ENCODE measurements at regions of chr22 and their contacts with region 1.

Region 1: GRCh38 chr22:17903564-17904295 is 120.6 kb downstream of the MICAL3 start:
- DNase-seq: peak in 1 of 3 donors; percentile 54
- ATAC-seq: peak; percentile 13 to 38
- H3K4me3 ChIP-seq: no peak overlapping the region
- H3K27ac ChIP-seq: peak overlapping the region; percentile 65
- H3K4me1 ChIP-seq: peaks cover 15% of the 10 kb centered on the region
- H3K27me3 ChIP-seq: no peaks in the 10 kb centered on the region

Region 2: DNA sequence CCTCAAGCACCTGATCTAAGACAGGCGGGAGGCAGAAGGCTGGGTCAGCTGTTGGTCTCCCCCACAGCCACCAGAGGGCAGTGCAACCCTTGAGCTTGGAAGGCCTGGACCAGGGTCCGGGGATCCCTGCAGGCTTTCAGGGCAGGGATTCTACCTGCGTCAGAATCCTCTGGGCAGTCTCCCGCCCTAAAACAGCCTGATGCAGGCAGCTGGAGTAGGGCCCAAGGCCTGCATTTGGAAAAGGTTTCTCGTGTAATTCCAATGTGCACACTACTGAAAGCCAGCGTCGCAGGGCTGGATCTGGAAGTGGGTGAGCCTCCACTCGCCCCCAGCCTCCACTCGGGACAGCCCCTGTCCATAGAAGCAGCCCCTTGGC is 161.2 kb before region 1 on chr22:
- intact Hi-C with region 1: no loop called
- DNase-seq: peak; percentile 55 to 75 (median 73)
- ATAC-seq: peak; percentile 40 to 65
- H3K4me3 ChIP-seq: no peak overlapping the region
- H3K27ac ChIP-seq: no peak overlapping the region
- H3K4me1 ChIP-seq: no peaks in the 10 kb centered on the region
- H3K27me3 ChIP-seq: no peaks in the 10 kb centered on the region

Region 3: DNA sequence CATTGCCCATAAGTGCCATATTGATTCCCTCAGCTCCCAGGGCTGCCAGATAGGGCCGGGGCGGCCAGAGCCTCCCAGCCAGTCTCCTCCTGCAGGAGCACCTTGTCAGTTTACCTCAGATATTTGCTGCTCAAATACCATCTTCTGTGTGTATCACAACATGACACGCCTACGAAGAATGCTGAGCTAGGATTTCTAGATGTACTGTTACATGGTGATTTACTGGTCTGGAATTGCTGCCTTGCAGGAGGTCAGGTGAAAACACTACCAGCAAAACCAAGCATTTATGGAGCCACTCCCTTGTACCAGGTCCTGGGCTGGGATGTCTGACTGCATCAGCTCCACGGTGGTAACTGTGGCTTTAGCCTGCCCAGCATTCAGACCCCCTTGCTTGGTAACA is 108.8 kb after region 1 on chr22:
- intact Hi-C with region 1: loop called in 2 of 4 experiments (anchors 10 kb)
- DNase-seq: no peak
- ATAC-seq: no peak
- H3K4me3 ChIP-seq: no peak overlapping the region
- H3K27ac ChIP-seq: no peak overlapping the region
- H3K4me1 ChIP-seq: no peaks in the 10 kb centered on the region
- H3K27me3 ChIP-seq: no peaks in the 10 kb centered on the region

Region 4: DNA sequence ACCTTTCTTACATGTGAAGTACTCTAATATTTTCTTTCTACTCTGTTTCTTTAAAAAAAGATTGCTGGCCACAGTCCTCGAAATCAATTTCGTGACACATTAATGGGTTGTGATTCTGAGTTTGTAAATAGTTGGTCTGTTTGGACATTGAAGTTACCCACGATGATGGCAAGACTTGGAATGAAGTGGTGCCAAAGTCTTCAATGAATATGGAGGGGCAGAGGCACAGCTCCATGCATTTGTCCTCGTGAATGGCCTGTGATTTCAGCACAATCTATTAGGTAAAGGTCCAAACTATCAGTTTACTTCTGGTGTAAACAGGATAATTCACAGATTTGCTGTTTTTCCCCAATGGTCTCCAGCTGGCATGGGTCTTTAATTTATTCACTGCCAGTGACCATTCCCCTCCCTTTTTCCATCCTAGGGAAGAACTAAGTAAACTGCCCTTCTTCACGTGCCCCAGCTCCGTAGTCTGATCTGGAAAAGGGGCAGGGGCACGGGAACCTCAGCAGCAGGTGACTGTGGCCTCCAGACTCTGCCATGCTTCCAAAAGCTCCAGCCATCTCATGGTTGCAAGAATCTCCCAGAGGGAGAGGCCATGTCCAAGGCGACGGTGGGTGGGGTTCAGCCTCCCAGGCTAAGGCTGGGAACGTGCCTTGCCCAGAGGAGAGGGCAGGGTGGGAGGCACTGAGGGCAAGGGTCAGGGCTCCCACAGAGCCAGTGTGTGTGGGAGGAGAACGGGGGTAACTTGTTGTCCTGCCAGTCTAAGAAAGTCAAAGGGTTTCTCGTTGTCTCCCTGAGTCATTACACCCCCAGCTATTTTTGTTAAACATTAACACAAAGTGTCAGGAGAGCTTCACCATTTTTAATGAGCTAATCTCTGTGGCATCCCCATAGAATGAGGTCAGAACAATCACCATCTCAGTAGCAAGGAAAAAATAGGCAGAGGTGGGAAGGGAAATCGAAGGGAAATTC is 157.2 kb after region 1 on chr22:
- intact Hi-C with region 1: loop called in 2 of 4 experiments (anchors 10 kb)
- DNase-seq: no peak
- ATAC-seq: no peak
- H3K4me3 ChIP-seq: no peak overlapping the region
- H3K27ac ChIP-seq: no peak overlapping the region
- H3K4me1 ChIP-seq: peaks cover 7% of the 10 kb centered on the region
- H3K27me3 ChIP-seq: no peaks in the 10 kb centered on the region